Dorsolateral prefrontal cortex (tissue), 120 donors: ENCODE measurements at regions of chr13 and their contacts with region 1.

Region 1: DNA sequence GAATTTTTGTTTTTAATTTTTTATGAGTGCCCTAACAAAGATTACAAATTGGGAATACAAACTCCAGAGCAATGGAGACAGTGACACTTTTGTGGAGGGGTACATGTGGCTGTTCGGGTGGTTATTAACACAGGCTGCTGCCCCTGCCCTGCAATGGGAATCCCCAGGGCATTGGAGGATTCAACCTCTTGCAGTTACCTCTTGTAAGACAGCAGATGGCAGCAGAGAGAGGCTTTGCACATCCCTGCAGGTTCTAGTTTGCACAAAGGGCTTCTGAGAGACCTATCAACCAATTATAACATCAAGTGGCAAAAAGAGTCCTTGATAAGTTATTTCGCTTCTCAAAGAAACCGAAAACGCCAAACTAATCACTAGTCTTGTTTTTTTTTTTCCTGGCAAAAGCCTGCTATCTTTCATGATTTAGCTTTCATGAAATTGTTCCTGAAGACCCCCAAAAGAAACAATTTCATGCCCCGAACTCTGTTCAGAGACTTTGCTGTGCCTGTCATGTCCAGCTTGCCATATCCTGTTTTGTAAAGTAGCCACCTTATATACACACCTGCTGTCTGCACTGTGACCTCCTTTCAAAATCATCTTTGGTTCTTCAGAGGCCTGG is 10.4 kb downstream of the GJB2 start:
- DNase-seq: peak in 2 of 10 donors; percentile 27 to 53
- H3K4me3 ChIP-seq: no peak overlapping the region
- H3K27ac ChIP-seq: no peak overlapping the region
- H3K27me3 ChIP-seq: peaks cover 0 to 43% (median 17%) of the 10 kb centered on the region in 45 donors
- CTCF ChIP-seq: peak; percentile 34 to 93 (median 84)

Region 2: DNA sequence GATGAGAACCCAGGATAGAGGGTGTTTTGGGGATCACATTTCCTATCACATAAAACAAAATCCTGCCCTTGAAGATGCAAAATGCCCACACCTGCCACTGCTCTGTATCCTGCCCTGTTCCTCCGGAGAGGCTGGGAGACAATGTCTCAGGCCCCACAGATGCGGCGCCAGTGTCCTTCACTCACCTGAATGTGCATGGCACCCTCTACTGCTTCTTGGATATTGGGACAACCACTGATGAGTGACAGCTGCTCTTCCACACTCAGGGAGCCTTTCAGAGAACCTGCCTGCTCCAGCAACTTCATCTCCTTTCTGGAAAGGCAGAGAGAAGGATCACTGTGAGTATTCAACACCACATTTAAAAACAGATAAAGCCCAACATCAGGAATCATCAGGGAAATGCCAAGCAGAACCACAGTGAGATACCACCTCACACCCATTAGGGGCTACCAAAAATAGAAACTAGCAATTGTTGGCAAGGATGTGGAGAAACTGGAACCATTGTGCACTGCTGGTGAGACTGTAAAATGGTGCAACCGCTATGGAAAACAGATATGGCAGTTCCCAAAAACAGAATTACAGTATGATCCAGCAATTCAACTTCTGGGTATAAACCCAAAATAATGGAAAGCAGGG is 307.0 kb after region 1 on chr13:
- intact Hi-C with region 1: loop called in 1 of 2 experiments (anchors 2 kb)
- DNase-seq: peak in 2 of 10 donors; percentile 54 to 61
- H3K4me3 ChIP-seq: no peak overlapping the region
- H3K27ac ChIP-seq: peak overlapping the region in 5 of 59 donors; percentile 2 to 38 (median 13)
- H3K27me3 ChIP-seq: no peaks in the 10 kb centered on the region
- CTCF ChIP-seq: peak in 21 of 56 donors; percentile 10 to 77 (median 55)

Region 3: GRCh38 chr13:20924758-20925394 is 742.5 kb after region 1 on chr13:
- intact Hi-C with region 1: loop called (anchors 2 to 10 kb)
- DNase-seq: peak; percentile 52 to 94 (median 75)
- H3K4me3 ChIP-seq: no peak overlapping the region
- H3K27ac ChIP-seq: peak overlapping the region in 2 of 59 donors; percentile 21 to 55
- H3K27me3 ChIP-seq: no peaks in the 10 kb centered on the region
- CTCF ChIP-seq: peak; percentile 70 to 94 (median 81)